ENCODE measurements at regions of chr6 and their contacts with region 1.

Region 1: GRCh38 chr6:36027501-36028087 is at the start of gene MAPK14:
- DNase-seq: peak; percentile 96
- ATAC-seq: peak; percentile 87
- H3K4me3 ChIP-seq: peak within 1 kb of the TSS; percentile 87
- H3K27ac ChIP-seq: peak within 1 kb of the TSS; percentile 84
- H3K4me1 ChIP-seq: no peaks in the 10 kb centered on the region; the same call in 1 of the 2 replicates
- H3K27me3 ChIP-seq: no peaks in the 10 kb centered on the region; a peak in 1 of 4 replicates
- CTCF ChIP-seq: peak; percentile 95 to 99 (median 97); a peak in 5 of 6 replicates
- EP300 ChIP-seq: no peak
- POLR2A ChIP-seq: peak; percentile 96
- RAD21 ChIP-seq: peak; percentile 94
- polyA plus RNA-seq, gene MAPK14: 12.5 to 13.7 TPM

Region 2: DNA sequence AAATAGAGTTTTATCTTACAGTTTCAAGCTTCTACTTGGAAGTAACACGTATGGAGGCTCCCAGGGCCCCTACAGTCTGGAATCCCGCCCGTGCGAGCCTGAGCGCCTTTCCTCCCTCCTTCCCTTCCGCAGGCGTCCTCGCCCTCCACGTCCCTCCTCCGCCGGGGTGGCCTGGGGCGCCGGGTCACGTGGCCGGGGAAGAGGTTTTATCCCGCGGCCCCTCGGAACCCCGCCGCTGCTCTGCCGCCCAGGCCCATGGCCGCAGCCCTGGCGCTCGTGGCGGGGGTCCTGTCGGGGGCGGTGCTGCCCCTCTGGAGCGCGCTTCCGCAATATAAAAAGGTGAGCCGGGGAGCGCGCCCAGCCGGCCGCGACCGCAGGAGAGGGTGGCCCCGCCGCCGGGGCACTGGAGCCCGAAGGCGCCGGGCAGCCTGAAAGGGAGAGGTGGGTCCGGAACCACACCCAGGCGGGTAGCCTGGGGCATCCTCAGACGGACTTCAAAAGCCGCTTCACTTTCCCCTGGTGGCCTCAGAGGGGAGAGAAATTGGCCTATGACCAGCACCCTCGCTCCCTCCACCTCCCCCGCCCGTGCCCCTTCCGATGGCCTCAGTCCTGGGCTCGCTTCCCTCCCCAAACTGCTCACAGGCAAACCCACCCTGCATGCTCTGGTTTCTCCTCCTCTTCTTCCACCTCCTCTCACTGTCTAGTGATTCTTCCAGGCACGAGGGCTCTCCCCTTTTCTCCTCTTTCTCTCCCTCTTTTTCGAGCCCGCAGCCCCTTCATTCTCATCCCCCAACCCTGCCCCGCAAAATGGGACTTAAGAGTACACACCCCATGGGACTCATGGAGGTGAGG is 251.0 kb before region 1 on chr6 and contains the start of gene CLPSL2:
- CTCF ChIA-PET with region 1: no interaction called
- POLR2A ChIA-PET with region 1: no interaction called
- RAD21 ChIA-PET with region 1: no interaction called
- SMC1A ChIA-PET with region 1: no interaction called
- in situ Hi-C with region 1: no loop called
- intact Hi-C with region 1: no loop called
- DNase-seq: no peak
- ATAC-seq: peak; percentile 79
- H3K4me3 ChIP-seq: peak within 1 kb of the TSS; percentile 61; the same call in 1 of the 2 replicates
- H3K27ac ChIP-seq: no peak within 1 kb of the TSS
- H3K4me1 ChIP-seq: no peaks in the 10 kb centered on the region
- H3K27me3 ChIP-seq: no peaks in the 10 kb centered on the region; a peak in 1 of 4 replicates
- CTCF ChIP-seq: no peak
- EP300 ChIP-seq: no peak
- POLR2A ChIP-seq: no peak
- RAD21 ChIP-seq: no peak
- polyA plus RNA-seq, gene CLPSL2: not detected

Region 3: GRCh38 chr6:36015666-36016065 is 11.9 kb before region 1 on chr6:
- CTCF ChIA-PET with region 1: interaction called, 3 read pairs
- POLR2A ChIA-PET with region 1: interaction called, 12 read pairs
- RAD21 ChIA-PET with region 1: interaction called, 3 read pairs
- SMC1A ChIA-PET with region 1: interaction called, 4 read pairs
- in situ Hi-C with region 1: no loop called
- intact Hi-C with region 1: no loop called
- DNase-seq: no peak
- ATAC-seq: no peak
- H3K4me3 ChIP-seq: no peak overlapping the region
- H3K27ac ChIP-seq: no peak overlapping the region
- H3K4me1 ChIP-seq: no peaks in the 10 kb centered on the region
- H3K27me3 ChIP-seq: no peaks in the 10 kb centered on the region
- CTCF ChIP-seq: no peak
- EP300 ChIP-seq: no peak
- POLR2A ChIP-seq: no peak
- RAD21 ChIP-seq: no peak

Region 4: DNA sequence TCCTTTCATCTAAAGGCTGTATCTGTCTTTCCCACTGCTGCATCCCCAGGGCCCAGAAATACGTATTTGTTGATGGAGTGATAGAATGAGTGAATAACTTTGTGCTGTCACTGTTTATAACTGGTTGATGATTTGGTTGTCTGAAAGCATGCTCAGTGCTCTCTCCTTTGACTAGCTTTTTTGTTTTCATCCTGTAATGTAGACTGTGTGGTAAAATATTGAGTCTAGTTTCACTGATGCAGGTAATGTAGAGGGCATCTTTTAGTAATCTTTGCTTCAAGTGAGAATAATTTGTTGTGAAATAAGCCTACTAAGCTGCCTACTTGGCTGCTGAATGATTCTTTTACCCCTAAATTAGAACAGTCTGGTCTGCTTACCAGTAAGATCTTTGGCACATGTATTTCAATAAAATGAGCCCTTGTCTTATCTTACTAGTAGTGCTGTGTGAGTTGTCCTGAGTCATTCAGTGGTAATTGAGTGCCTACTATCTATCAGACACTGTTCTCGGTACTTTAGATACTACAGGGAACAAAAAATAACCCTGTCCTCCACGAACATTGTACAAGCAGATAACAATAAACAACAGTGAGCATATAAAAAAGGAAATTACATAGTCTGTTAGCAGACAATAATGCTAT is 39.9 kb after region 1 on chr6:
- CTCF ChIA-PET with region 1: interaction called, 5 read pairs
- POLR2A ChIA-PET with region 1: interaction called, 4 read pairs
- RAD21 ChIA-PET with region 1: interaction called, 13 read pairs
- SMC1A ChIA-PET with region 1: interaction called, 4 read pairs
- in situ Hi-C with region 1: no loop called
- intact Hi-C with region 1: no loop called
- DNase-seq: no peak
- ATAC-seq: peak; percentile 26; the same call in 2 of the 3 replicates
- H3K4me3 ChIP-seq: no peak overlapping the region
- H3K27ac ChIP-seq: no peak overlapping the region
- H3K4me1 ChIP-seq: peaks cover 3% of the 10 kb centered on the region; the same call in 1 of the 2 replicates
- H3K27me3 ChIP-seq: no peaks in the 10 kb centered on the region
- CTCF ChIP-seq: no peak
- EP300 ChIP-seq: no peak
- POLR2A ChIP-seq: no peak
- RAD21 ChIP-seq: no peak

Region 5: DNA sequence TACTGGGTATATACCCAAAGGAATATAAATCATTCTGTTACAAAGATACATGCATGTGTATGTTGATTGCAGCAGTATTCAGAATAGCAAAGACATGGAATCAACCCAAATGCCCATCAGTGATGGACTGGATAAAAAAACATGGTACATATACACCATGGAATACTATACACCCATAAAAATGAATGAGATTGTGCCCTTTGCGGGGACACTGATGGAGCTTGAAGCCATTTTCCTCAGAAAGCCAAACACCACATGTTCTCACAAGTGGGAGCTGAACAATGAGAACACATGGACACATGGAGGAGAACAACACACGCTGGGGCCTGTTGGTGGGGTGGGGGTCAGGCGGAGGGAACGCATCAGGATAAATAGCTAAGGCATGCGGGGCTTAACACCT is 61.5 kb after region 1 on chr6:
- CTCF ChIA-PET with region 1: interaction called, 165 read pairs
- POLR2A ChIA-PET with region 1: interaction called, 5 read pairs
- RAD21 ChIA-PET with region 1: interaction called, 140 read pairs
- SMC1A ChIA-PET with region 1: interaction called, 167 read pairs
- in situ Hi-C with region 1: no loop called
- intact Hi-C with region 1: no loop called
- DNase-seq: no peak
- ATAC-seq: no peak
- H3K4me3 ChIP-seq: no peak overlapping the region
- H3K27ac ChIP-seq: no peak overlapping the region
- H3K4me1 ChIP-seq: no peaks in the 10 kb centered on the region
- H3K27me3 ChIP-seq: no peaks in the 10 kb centered on the region
- CTCF ChIP-seq: no peak
- EP300 ChIP-seq: no peak
- POLR2A ChIP-seq: no peak
- RAD21 ChIP-seq: no peak

Region 6: GRCh38 chr6:36131511-36132245 is 104.1 kb after region 1 on chr6:
- CTCF ChIA-PET with region 1: interaction called, 8 read pairs
- POLR2A ChIA-PET with region 1: interaction called, 9 read pairs
- RAD21 ChIA-PET with region 1: interaction called, 10 read pairs
- SMC1A ChIA-PET with region 1: interaction called, 8 read pairs
- in situ Hi-C with region 1: no loop called
- intact Hi-C with region 1: no loop called
- DNase-seq: peak; percentile 92
- ATAC-seq: peak; percentile 80
- H3K4me3 ChIP-seq: peak overlapping the region; percentile 46; the same call in 1 of the 2 replicates
- H3K27ac ChIP-seq: no peak overlapping the region; the same call in 1 of the 2 replicates
- H3K4me1 ChIP-seq: peaks cover 30% of the 10 kb centered on the region
- H3K27me3 ChIP-seq: no peaks in the 10 kb centered on the region
- CTCF ChIP-seq: no peak; a peak in 1 of 6 replicates
- EP300 ChIP-seq: 0 out of 4 replicates have a peak, but pooled peaks of 1 of the 2 experiments have one; percentile 9
- POLR2A ChIP-seq: no peak
- RAD21 ChIP-seq: no peak

Region 7: GRCh38 chr6:36360241-36361054 is 332.9 kb after region 1 on chr6:
- CTCF ChIA-PET with region 1: interaction called, 69 read pairs
- POLR2A ChIA-PET with region 1: interaction called, 30 read pairs
- RAD21 ChIA-PET with region 1: interaction called, 68 read pairs
- SMC1A ChIA-PET with region 1: interaction called, 36 read pairs
- in situ Hi-C with region 1: no loop called
- intact Hi-C with region 1: loop called (anchors 1 kb)
- DNase-seq: no peak
- ATAC-seq: peak; percentile 65
- H3K4me3 ChIP-seq: no peak overlapping the region
- H3K27ac ChIP-seq: no peak overlapping the region
- H3K4me1 ChIP-seq: peaks cover 36% of the 10 kb centered on the region
- H3K27me3 ChIP-seq: no peaks in the 10 kb centered on the region
- CTCF ChIP-seq: peak; percentile 78 to 93 (median 81)
- EP300 ChIP-seq: peak in 1 of 2 experiments; percentile 16; a peak in 1 of 4 replicates
- POLR2A ChIP-seq: no peak
- RAD21 ChIP-seq: peak; percentile 94